Heart left ventricle (tissue), 16 donors: ENCODE measurements at regions of chr5 and their contacts with region 1.

Region 1: DNA sequence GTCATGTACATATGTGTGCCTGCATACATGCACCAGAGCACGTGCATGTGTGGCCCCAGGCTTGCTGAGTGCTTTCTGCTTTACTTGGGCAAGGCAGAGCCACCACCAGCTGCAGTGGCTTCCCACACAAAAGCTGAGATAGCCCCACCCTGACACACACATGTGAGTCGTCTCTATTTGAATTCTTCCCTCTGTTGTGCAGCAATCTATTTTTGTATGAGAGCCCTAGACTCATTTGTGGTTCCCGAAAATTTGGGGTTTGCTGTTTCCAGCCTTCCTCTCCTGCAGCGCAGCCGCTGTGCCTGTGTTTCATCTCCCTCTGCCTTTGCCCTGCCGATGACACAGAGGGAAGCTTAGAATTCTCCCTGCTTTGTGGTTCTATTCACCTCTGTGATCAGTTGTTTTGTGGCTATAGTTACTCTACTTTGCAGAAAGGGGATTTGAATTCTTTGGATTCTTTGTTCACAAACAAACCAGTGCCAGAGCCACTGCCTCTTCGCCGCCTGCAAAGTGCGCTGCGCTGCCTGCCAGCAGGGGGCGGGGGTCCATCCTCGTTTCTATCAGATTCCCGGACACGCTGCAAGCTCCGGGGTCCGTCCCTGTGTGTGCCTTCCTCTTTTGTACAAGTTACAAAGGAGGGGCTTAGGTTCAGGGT is 95.8 kb upstream of the DAP start:
- DNase-seq: peak; percentile 40 to 70 (median 52)
- ATAC-seq: peak in 3 of 4 donors; percentile 36 to 77 (median 61)
- H3K4me3 ChIP-seq: peak overlapping the region in 5 of 12 donors; percentile 0 to 38 (median 6)
- H3K27ac ChIP-seq: no peak overlapping the region
- H3K4me1 ChIP-seq: peaks cover 0 to 33% (median 7%) of the 10 kb centered on the region in 12 donors
- H3K27me3 ChIP-seq: peaks cover 0 to 9% (median 0%) of the 10 kb centered on the region in 9 donors
- CTCF ChIP-seq: peak; percentile 69 to 85 (median 78)
- POLR2A ChIP-seq: no peak

Region 2: GRCh38 chr5:10452768-10453331 is 404.0 kb before region 1 on chr5:
- intact Hi-C with region 1: loop called in 1 of 10 experiments (anchors 10 kb)
- DNase-seq: no peak
- ATAC-seq: peak; percentile 74 to 84 (median 82)
- H3K4me3 ChIP-seq: no peak overlapping the region
- H3K27ac ChIP-seq: no peak overlapping the region
- H3K4me1 ChIP-seq: peaks cover 3 to 25% (median 12%) of the 10 kb centered on the region in 12 donors
- H3K27me3 ChIP-seq: no peaks in the 10 kb centered on the region
- CTCF ChIP-seq: peak; percentile 63 to 90 (median 80)
- POLR2A ChIP-seq: no peak

Region 3: GRCh38 chr5:10689391-10690081 is 167.3 kb before region 1 on chr5:
- intact Hi-C with region 1: loop called in 2 of 10 experiments (anchors 2 to 10 kb)
- DNase-seq: no peak
- ATAC-seq: peak in 3 of 4 donors; percentile 14 to 22 (median 18)
- H3K4me3 ChIP-seq: no peak overlapping the region
- H3K27ac ChIP-seq: no peak overlapping the region
- H3K4me1 ChIP-seq: peaks cover 0 to 8% (median 0%) of the 10 kb centered on the region in 12 donors
- H3K27me3 ChIP-seq: no peaks in the 10 kb centered on the region
- CTCF ChIP-seq: peak in 5 of 12 donors; percentile 9 to 37 (median 18)
- POLR2A ChIP-seq: no peak

Region 4: GRCh38 chr5:11050596-11051304 is 193.9 kb after region 1 on chr5:
- intact Hi-C with region 1: loop called in 1 of 10 experiments (anchors 10 kb)
- DNase-seq: no peak
- ATAC-seq: no peak
- H3K4me3 ChIP-seq: no peak overlapping the region
- H3K27ac ChIP-seq: no peak overlapping the region
- H3K4me1 ChIP-seq: peaks cover 0 to 6% (median 0%) of the 10 kb centered on the region in 12 donors
- H3K27me3 ChIP-seq: no peaks in the 10 kb centered on the region
- CTCF ChIP-seq: no peak
- POLR2A ChIP-seq: no peak

Region 5: GRCh38 chr5:11182441-11183268 is 325.8 kb after region 1 on chr5:
- intact Hi-C with region 1: loop called in 4 of 10 experiments (anchors 5 to 10 kb)
- DNase-seq: no peak
- ATAC-seq: peak in 1 of 4 donors; percentile 34
- H3K4me3 ChIP-seq: no peak overlapping the region
- H3K27ac ChIP-seq: no peak overlapping the region
- H3K4me1 ChIP-seq: peaks cover 0 to 9% (median 0%) of the 10 kb centered on the region in 12 donors
- H3K27me3 ChIP-seq: no peaks in the 10 kb centered on the region
- CTCF ChIP-seq: peak in 10 of 12 donors; percentile 24 to 63 (median 40)
- POLR2A ChIP-seq: no peak